GM10248 (cell line): ENCODE measurements at regions of chr4 and their contacts with region 1.

Region 1: GRCh38 chr4:48944756-48945241 is 38.2 kb upstream of the OCIAD2 start:
- DNase-seq: peak; percentile 31
- CTCF ChIP-seq: peak; percentile 53

Region 2: GRCh38 chr4:48931459-48931858 is 13.3 kb before region 1 on chr4:
- CTCF ChIA-PET with region 1: interaction called, 18 read pairs
- POLR2A ChIA-PET with region 1: no interaction called
- DNase-seq: no peak
- CTCF ChIP-seq: no peak